ENCODE measurements at regions of chr17 and their contacts with region 1.

Region 1: DNA sequence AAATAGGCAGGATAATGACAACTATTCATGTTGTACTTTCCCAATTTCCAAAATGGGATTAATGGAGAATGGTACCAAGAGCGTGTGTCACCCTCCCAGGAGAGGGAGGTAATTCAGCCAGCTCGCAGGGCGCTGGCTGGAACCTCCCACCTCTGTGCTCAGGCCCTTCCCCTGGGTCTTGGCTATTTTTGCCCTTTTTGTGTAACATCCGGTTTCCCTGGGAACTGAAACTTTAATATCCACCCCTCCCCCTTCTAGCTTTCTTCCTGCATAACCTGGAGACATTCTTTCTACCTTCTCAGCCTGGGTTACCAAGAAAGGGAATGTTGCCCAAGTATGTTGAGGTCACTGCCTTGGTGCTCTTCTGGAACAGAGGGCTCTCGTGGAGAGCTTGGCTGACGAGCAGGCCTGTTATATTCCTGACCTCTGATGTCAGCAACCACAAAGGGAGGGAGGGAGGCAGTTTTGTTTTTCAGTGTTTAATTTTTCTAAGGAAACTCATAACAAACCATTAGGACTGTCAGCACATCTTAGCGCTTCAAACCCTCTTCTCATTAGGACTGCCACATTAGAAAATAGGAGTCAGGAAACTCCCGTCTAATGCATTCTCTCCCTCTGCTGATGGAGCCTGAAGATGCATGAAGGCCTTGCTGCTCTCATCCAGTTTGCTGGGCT is 25.6 kb downstream of the ITGB3 start:
- DNase-seq: peak; percentile 75 to 83 (median 77)
- ATAC-seq: peak; percentile 63 to 84 (median 78)
- H3K4me3 ChIP-seq: peak overlapping the region in 2 of 12 donors; percentile 2 to 6
- H3K27ac ChIP-seq: peak overlapping the region; percentile 75 to 92 (median 86)
- H3K4me1 ChIP-seq: peaks cover 2 to 76% (median 64%) of the 10 kb centered on the region in 12 donors
- H3K27me3 ChIP-seq: no peaks in the 10 kb centered on the region
- CTCF ChIP-seq: peak in 2 of 12 donors; percentile 23 to 27
- POLR2A ChIP-seq: peak in 1 of 2 donors; percentile 11

Region 2: DNA sequence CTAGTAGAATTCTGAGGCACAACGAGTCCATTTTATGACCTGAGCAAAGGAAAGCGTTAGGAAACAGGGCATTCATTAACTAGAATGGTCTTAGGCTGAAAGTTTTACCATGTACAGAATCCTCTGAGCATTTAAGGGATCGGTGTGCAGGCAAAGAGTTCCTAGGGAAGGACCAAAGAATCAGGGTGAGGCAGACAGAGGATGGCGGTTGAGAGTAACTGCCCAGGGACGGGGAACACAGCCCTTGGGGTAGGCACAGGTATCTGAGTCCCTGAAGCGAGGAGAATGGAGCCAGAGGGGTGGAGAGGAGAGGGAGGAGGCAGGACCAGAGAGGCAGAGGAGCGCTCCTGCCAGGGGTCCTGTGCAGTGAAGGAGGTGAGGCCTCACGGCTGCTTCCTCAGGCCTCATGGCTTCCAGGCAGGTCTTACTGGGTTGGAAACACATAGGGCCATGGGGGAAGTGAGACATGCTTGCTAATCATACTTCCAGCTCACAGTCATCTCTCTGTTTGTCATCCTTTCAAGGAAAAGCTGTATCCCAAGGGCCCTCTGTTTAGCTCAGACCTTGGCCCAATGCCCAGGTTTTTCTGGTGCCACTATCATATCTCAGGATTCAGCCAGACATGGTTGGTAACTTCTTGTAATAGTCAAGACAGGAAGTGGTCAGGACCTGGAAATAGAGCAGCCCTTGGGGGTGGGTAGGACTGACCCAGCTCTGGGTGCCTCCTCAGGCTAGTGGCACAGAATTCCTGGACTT is 39.4 kb before region 1 on chr17:
- intact Hi-C with region 1: loop called in 2 of 10 experiments (anchors 5 kb)
- DNase-seq: peak; percentile 75 to 91 (median 81)
- ATAC-seq: peak; percentile 62 to 92 (median 88)
- H3K4me3 ChIP-seq: no peak overlapping the region
- H3K27ac ChIP-seq: peak overlapping the region; percentile 35 to 92 (median 78)
- H3K4me1 ChIP-seq: peaks cover 4 to 23% (median 16%) of the 10 kb centered on the region in 12 donors
- H3K27me3 ChIP-seq: no peaks in the 10 kb centered on the region
- CTCF ChIP-seq: no peak
- POLR2A ChIP-seq: no peak

Region 3: DNA sequence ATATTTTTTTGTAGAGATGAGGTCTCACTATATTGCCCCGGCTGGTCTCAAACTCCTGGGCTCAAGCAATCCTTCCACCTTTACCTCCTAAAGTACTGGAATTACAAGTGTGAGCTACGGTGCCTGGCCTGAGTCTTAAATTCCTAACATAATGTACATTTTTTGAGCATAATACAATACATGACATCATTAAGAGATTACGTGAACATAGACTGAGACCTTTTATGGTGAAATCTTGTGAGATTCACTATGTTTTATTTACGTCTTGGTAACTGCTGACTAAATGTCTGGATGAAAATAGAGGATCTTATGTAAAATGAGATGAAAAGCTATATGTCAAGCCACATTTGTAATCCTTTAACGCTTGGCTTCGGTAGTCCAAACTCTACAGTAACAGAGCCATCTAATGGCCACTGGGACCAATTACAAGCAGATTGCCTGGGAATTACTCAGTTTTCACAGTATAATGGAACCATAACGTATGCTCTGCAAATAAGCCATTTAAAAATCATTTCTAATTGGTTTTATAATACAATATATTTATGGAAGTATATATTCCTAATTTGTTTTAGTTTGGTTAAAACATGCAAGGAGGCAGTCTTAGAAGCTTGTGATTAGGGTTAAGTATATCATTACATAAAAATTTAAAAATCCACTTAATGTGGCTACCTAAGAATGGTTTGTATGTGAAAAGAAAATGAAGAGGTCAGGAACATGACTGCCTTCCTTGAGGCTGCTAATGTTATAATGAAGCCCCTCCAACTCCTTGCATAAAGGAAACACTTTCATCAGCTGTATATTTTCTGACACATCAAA is 36.5 kb after region 1 on chr17:
- intact Hi-C with region 1: loop called in 1 of 10 experiments (anchors 5 kb)
- DNase-seq: peak in 2 of 5 donors; percentile 31 to 37
- ATAC-seq: peak; percentile 65 to 84 (median 80)
- H3K4me3 ChIP-seq: no peak overlapping the region
- H3K27ac ChIP-seq: peak overlapping the region in 3 of 12 donors; percentile 31 to 66 (median 64)
- H3K4me1 ChIP-seq: peaks cover 0 to 15% (median 2%) of the 10 kb centered on the region in 12 donors
- H3K27me3 ChIP-seq: no peaks in the 10 kb centered on the region
- CTCF ChIP-seq: peak; percentile 70 to 93 (median 86)
- POLR2A ChIP-seq: no peak